Activated naive CD8-positive, alpha-beta T cell treated with anti-CD3 and anti-CD28 coated beads, Interleukin-2, amount 10 ng/mL, durations not matched to agents 7 days and 5 days (primary cell): ENCODE measurements at regions of chr6 and their contacts with region 1.

Region 1: DNA sequence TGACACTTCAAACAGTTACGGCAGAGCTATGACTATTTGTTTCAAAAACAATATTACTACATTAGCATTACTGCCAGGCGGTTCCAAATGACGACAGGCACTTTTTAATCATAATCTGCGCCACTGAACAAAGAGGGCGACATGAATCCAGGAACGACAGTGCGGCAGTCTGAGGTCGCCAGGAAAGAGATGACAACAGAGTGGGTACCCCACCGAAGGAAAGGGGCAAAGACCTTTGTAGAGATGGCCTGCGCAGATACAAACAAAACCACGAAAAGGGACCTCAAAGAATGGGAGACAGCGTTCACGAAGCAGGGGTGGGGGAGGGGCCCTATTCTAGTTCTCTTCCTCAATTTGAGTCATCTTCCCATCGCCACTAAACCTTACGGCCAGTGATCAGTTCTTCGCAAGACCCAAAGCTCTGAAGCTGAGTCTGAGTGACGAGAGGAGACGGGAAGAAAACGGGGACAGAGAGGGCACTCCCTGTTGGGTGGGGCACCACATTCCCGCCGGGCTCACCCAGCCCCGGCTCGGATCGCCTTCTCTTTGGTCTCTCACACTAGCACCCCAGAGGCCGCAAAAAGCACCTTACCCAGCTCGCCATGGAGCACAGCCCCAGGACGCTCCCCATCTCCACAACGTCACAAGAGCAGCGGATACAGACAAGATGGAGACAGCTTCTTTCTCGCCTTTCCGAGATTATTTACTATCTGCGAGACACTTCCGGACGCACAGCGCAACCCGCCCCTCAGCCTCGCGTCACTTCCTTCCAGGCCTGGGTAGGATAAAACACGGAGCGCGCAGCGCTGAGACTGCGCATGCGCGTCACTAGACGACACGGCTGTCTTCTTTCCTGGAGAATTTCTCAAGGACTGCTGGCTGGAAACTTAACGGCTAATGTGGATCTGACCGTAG is at the start of gene SERINC1:
- DNase-seq: peak; percentile 88
- ATAC-seq: peak; percentile 98
- H3K4me3 Mint-ChIP-seq: peak within 1 kb of the TSS; percentile 98
- H3K27ac Mint-ChIP-seq: peak within 1 kb of the TSS; percentile 99
- H3K4me1 Mint-ChIP-seq: peaks cover 18% of the 10 kb centered on the region
- H3K27me3 Mint-ChIP-seq: no peaks in the 10 kb centered on the region
- total RNA-seq, gene SERINC1: 80.7 to 83.5 TPM

Region 2: GRCh38 chr6:122170274-122170673 is 301.1 kb before region 1 on chr6:
- POLR2A ChIA-PET with region 1: no interaction called
- DNase-seq: no peak
- ATAC-seq: no peak
- H3K4me3 Mint-ChIP-seq: no peak overlapping the region
- H3K27ac Mint-ChIP-seq: no peak overlapping the region
- H3K4me1 Mint-ChIP-seq: no peaks in the 10 kb centered on the region
- H3K27me3 Mint-ChIP-seq: no peaks in the 10 kb centered on the region

Region 3: GRCh38 chr6:122399384-122400158 is 71.8 kb before region 1 on chr6 and contains the start of gene HSF2:
- POLR2A ChIA-PET with region 1: interaction called, 13 read pairs
- DNase-seq: peak; percentile 88
- ATAC-seq: peak; percentile 100
- H3K4me3 Mint-ChIP-seq: peak within 1 kb of the TSS; percentile 98
- H3K27ac Mint-ChIP-seq: peak within 1 kb of the TSS; percentile 97
- H3K4me1 Mint-ChIP-seq: peaks cover 35% of the 10 kb centered on the region
- H3K27me3 Mint-ChIP-seq: no peaks in the 10 kb centered on the region
- total RNA-seq, gene HSF2: 17.9 to 20.7 TPM

Region 4: GRCh38 chr6:122484760-122485159 is 13.4 kb after region 1 on chr6:
- POLR2A ChIA-PET with region 1: no interaction called
- DNase-seq: no peak
- ATAC-seq: no peak
- H3K4me3 Mint-ChIP-seq: no peak overlapping the region
- H3K27ac Mint-ChIP-seq: no peak overlapping the region
- H3K4me1 Mint-ChIP-seq: no peaks in the 10 kb centered on the region
- H3K27me3 Mint-ChIP-seq: no peaks in the 10 kb centered on the region

Region 5: GRCh38 chr6:122501475-122501874 is 30.1 kb after region 1 on chr6:
- POLR2A ChIA-PET with region 1: no interaction called
- DNase-seq: no peak
- ATAC-seq: no peak
- H3K4me3 Mint-ChIP-seq: no peak overlapping the region
- H3K27ac Mint-ChIP-seq: no peak overlapping the region
- H3K4me1 Mint-ChIP-seq: no peaks in the 10 kb centered on the region
- H3K27me3 Mint-ChIP-seq: peaks cover 12% of the 10 kb centered on the region